ENCODE measurements at regions of chrX and their contacts with region 1.

Region 1: GRCh38 chrX:15242899-15243555 is 26.9 kb downstream of the ASB9 start:
- DNase-seq: peak; percentile 45
- ATAC-seq: no peak
- H3K4me3 ChIP-seq: no peak overlapping the region
- H3K4me3 Mint-ChIP-seq: no peak overlapping the region
- H3K27ac ChIP-seq: no peak overlapping the region
- H3K27ac Mint-ChIP-seq: no peak overlapping the region
- H3K4me1 ChIP-seq: no peaks in the 10 kb centered on the region
- H3K4me1 Mint-ChIP-seq: no peaks in the 10 kb centered on the region
- H3K27me3 ChIP-seq: no peaks in the 10 kb centered on the region
- H3K27me3 Mint-ChIP-seq: no peaks in the 10 kb centered on the region
- CTCF ChIP-seq: peak; percentile 57

Region 2: GRCh38 chrX:13506574-13506973 is 1736.5 kb before region 1 on chrX:
- CTCF ChIA-PET with region 1: interaction called, 3 read pairs
- POLR2A ChIA-PET with region 1: no interaction called
- intact Hi-C with region 1: loop called (anchors 10 kb)
- DNase-seq: peak; percentile 58
- ATAC-seq: no peak
- H3K4me3 ChIP-seq: no peak overlapping the region
- H3K4me3 Mint-ChIP-seq: no peak overlapping the region
- H3K27ac ChIP-seq: no peak overlapping the region
- H3K27ac Mint-ChIP-seq: no peak overlapping the region
- H3K4me1 ChIP-seq: no peaks in the 10 kb centered on the region
- H3K4me1 Mint-ChIP-seq: no peaks in the 10 kb centered on the region
- H3K27me3 ChIP-seq: no peaks in the 10 kb centered on the region
- H3K27me3 Mint-ChIP-seq: no peaks in the 10 kb centered on the region
- CTCF ChIP-seq: peak; percentile 79

Region 3: DNA sequence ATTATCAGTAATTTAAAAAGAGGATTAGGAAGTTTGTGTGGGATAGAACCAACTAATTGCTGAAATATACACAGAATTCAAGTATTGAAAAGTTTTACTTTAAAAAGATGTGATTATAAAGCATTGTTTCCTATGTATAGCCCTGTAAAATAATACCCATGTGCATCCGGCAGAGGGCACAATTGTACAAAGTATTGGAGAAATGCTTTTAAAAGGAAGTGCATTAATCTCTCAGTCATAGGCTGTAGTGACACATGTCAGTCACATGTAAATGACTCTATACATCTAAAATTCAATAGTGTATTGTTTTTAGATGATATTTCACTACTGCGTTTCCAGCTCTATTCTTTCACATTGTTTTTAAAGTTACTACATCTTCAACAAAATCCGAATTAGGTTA is 1203.7 kb before region 1 on chrX:
- CTCF ChIA-PET with region 1: interaction called, 30 read pairs
- POLR2A ChIA-PET with region 1: no interaction called
- intact Hi-C with region 1: loop called (anchors 1 kb)
- DNase-seq: peak; percentile 70
- ATAC-seq: peak; percentile 75
- H3K4me3 ChIP-seq: no peak overlapping the region
- H3K4me3 Mint-ChIP-seq: no peak overlapping the region
- H3K27ac ChIP-seq: no peak overlapping the region
- H3K27ac Mint-ChIP-seq: no peak overlapping the region
- H3K4me1 ChIP-seq: no peaks in the 10 kb centered on the region
- H3K4me1 Mint-ChIP-seq: no peaks in the 10 kb centered on the region
- H3K27me3 ChIP-seq: peaks cover 0 to 11% (median 0%) of the 10 kb centered on the region in 4 experiments
- H3K27me3 Mint-ChIP-seq: no peaks in the 10 kb centered on the region
- CTCF ChIP-seq: peak; percentile 69

Region 4: GRCh38 chrX:15098505-15098904 is 144.5 kb before region 1 on chrX:
- CTCF ChIA-PET with region 1: no interaction called
- POLR2A ChIA-PET with region 1: no interaction called
- intact Hi-C with region 1: no loop called
- DNase-seq: no peak
- ATAC-seq: no peak
- H3K4me3 ChIP-seq: no peak overlapping the region
- H3K4me3 Mint-ChIP-seq: no peak overlapping the region
- H3K27ac ChIP-seq: no peak overlapping the region
- H3K27ac Mint-ChIP-seq: no peak overlapping the region
- H3K4me1 ChIP-seq: no peaks in the 10 kb centered on the region
- H3K4me1 Mint-ChIP-seq: no peaks in the 10 kb centered on the region
- H3K27me3 ChIP-seq: no peaks in the 10 kb centered on the region
- H3K27me3 Mint-ChIP-seq: no peaks in the 10 kb centered on the region
- CTCF ChIP-seq: no peak

Region 5: DNA sequence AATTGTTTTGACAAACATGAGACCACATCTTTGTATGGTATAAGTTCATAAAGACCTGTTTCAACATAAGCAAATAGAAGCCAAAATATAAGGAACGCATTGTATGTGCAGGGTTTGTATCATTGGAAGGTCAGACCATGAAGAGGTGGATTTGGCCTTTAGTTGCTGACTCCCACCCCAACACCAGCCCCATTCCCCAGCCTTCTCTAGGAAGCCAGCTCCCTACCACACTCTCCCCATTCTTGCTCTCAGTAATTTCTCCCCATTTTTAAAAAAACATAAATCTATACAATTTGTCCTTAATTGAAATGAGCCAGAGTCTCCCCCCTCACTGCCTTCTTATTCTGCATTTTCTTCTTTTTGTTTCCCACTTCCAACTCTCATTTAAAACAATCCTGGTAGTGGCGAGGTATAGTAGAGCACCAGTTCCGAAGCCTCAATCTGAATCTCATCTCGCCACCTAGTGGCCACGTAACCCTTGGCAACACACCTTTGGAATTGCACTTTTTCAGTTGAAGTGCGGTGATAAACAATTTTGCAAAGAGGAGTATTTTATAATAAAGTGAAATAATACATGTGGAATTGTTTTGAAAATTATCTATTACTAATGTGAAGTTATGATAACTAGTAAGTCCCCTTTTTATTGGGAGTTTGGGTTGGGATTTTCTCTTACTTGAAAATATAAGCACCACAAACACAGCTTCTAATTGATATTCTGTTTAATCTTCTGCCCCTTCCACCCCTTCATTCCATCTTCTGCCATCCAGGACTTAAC is 99.8 kb before region 1 on chrX:
- CTCF ChIA-PET with region 1: interaction called, 7 read pairs
- POLR2A ChIA-PET with region 1: no interaction called
- intact Hi-C with region 1: loop called (anchors 10 kb)
- DNase-seq: peak; percentile 54
- ATAC-seq: peak; percentile 36
- H3K4me3 ChIP-seq: no peak overlapping the region
- H3K4me3 Mint-ChIP-seq: no peak overlapping the region
- H3K27ac ChIP-seq: no peak overlapping the region
- H3K27ac Mint-ChIP-seq: no peak overlapping the region
- H3K4me1 ChIP-seq: no peaks in the 10 kb centered on the region
- H3K4me1 Mint-ChIP-seq: peaks cover 2% of the 10 kb centered on the region
- H3K27me3 ChIP-seq: no peaks in the 10 kb centered on the region
- H3K27me3 Mint-ChIP-seq: no peaks in the 10 kb centered on the region
- CTCF ChIP-seq: peak; percentile 70

Region 6: GRCh38 chrX:15563056-15563455 is 320.0 kb after region 1 on chrX:
- CTCF ChIA-PET with region 1: no interaction called
- POLR2A ChIA-PET with region 1: no interaction called
- intact Hi-C with region 1: no loop called
- DNase-seq: no peak
- ATAC-seq: no peak
- H3K4me3 ChIP-seq: no peak overlapping the region
- H3K4me3 Mint-ChIP-seq: no peak overlapping the region
- H3K27ac ChIP-seq: no peak overlapping the region
- H3K27ac Mint-ChIP-seq: no peak overlapping the region
- H3K4me1 ChIP-seq: no peaks in the 10 kb centered on the region
- H3K4me1 Mint-ChIP-seq: no peaks in the 10 kb centered on the region
- H3K27me3 ChIP-seq: no peaks in the 10 kb centered on the region
- H3K27me3 Mint-ChIP-seq: peaks cover 5% of the 10 kb centered on the region
- CTCF ChIP-seq: no peak